ENCODE measurements at regions of chr19 and their contacts with region 1.

Region 1: GRCh38 chr19:13262450-13262849 is 112.2 kb downstream of the IER2 start:
- DNase-seq: no peak
- ATAC-seq: peak; percentile 80

Region 2: GRCh38 chr19:11722414-11722813 is 1540.0 kb before region 1 on chr19:
- intact Hi-C with region 1: no loop called
- DNase-seq: no peak
- ATAC-seq: no peak

Region 3: GRCh38 chr19:13195678-13196077 is 66.8 kb before region 1 on chr19:
- intact Hi-C with region 1: loop called in 1 of 2 experiments (anchors 10 kb)
- DNase-seq: peak; percentile 81
- ATAC-seq: peak; percentile 68

Region 4: DNA sequence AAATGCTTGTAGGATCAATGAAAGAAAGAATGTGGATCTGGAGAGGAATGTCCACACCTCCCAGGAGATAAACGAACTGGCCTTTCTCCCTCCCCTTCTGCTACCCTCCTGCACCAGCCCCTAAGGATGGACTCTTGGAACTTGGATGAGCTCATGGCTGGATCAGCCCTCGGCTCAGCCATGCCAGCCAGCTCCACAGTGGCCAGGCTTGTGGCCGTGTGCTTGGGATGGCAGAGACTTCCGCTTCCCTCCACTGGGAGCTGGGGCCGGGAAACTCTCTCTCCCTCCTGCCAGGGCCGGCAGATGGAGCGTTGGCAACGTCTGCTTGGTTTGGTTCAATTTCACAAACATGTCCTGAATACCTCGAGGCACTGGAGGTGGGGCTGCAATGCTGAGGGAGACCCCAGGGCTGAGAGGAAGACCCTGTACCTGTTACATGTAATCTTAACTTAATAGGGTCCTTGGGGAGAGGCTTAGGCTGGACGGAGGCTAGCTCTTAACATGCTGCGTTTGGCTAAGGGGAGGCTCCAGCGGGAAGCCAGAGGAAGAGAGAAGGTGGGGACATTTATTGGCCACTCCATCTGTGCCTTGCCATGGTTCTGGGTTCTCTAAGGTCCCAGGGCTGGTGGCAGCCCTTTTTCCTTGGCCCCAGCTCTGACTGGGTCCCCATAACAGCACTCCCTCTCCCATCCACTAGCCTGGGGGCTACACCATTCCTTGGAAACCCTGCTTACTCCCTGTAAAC is 40.2 kb after region 1 on chr19:
- intact Hi-C with region 1: no loop called
- DNase-seq: no peak
- ATAC-seq: no peak